HCT116 (cell line): ENCODE measurements at regions of chr9 and their contacts with region 1.

Region 1: DNA sequence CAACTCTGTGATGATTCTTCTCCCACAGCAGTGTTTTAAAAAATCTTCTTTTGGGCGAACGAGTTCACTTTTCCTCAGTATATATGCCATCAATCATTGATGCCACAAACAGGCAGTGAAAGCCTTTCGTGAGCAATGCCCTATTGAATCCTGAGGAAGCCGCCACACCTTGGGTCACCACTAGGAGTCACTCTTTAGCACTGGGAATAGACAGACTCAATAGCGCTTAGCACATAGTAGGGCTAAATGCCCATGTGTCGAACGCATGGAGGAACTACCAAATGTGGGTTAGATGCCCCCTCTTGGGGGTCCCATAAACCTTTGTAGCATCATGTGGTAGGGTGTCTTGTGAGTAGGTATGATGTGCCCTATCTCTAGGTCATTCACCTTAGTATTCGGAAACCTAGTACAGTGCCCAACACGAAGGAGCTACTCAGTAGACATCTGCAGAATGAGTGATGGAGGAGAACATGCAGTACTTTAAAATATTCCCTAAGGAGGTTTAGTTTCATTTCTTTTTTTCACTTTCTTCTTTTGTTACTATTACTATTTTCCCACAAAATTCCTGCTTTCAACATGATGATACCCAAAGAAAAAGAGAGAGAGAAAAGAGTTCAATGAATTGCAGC is 603.7 kb downstream of the BNC2 start:
- DNase-seq: no peak
- ATAC-seq: no peak
- H3K4me3 ChIP-seq: no peak overlapping the region
- H3K27ac ChIP-seq: no peak overlapping the region
- H3K4me1 ChIP-seq: no peaks in the 10 kb centered on the region
- H3K27me3 ChIP-seq: peaks cover 5% of the 10 kb centered on the region; the same call in 1 of the 2 replicates
- CTCF ChIP-seq: peak; percentile 21 to 87 (median 72); a peak in 5 of 6 replicates
- POLR2A ChIP-seq: no peak
- RAD21 ChIP-seq: peak; percentile 45

Region 2: DNA sequence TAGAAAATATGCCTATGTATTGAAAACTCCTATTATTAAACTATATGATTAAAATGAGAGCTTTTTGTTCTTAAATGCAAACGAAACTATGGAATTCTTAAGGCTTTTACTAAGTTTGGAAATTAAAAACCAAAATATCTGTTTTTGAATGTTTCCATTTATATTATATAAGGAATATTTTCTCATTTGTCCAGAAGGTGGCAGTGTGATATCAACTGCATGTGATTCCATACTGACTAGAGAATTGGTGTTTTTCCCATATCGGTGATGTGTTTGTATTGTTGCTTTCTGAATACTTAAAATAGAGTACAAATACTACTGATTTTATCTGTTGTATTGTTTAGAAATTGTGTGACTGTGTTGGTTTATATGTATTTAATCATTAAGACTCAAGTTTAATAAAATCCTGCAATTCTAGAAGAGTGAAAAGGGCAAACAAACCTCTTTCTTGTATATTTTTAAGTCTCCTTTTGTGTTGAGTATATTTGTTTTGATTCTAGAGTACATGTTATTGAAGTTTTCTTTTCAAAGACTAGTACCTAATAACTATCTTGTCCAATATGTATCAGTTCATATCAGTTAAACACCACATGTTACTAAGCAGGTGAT is 393.1 kb before region 1 on chr9:
- CTCF ChIA-PET with region 1: no interaction called
- POLR2A ChIA-PET with region 1: no interaction called
- RAD21 ChIA-PET with region 1: no interaction called
- intact Hi-C with region 1: loop called (anchors 5 kb)
- DNase-seq: peak; percentile 24
- ATAC-seq: peak; percentile 58; the same call in 1 of the 2 replicates
- H3K4me3 ChIP-seq: no peak overlapping the region
- H3K27ac ChIP-seq: no peak overlapping the region
- H3K4me1 ChIP-seq: no peaks in the 10 kb centered on the region
- H3K27me3 ChIP-seq: no peaks in the 10 kb centered on the region
- CTCF ChIP-seq: peak; percentile 51 to 72 (median 52); a peak in 5 of 6 replicates
- POLR2A ChIP-seq: no peak
- RAD21 ChIP-seq: peak; percentile 71

Region 3: DNA sequence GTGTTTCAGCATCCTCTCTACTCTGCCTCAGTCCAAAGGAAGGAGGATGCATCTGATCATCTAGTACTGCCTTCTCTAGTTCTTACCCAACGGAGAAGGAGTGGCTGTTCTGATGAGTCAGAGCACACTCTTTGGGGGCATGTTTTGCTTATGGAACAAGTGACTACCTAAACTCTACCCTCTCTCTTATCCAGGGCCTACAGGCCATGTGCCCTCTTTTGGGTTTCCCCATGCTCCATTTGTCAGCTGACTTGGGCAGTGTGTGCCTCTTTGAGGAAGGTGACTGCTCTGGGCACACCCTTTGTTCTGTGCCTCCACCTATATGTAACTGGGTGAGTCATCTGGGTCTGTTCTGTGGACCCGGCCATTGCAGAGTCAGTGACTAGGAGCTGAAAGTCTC is 693.3 kb after region 1 on chr9:
- CTCF ChIA-PET with region 1: no interaction called
- POLR2A ChIA-PET with region 1: no interaction called
- RAD21 ChIA-PET with region 1: no interaction called
- intact Hi-C with region 1: no loop called
- DNase-seq: no peak
- ATAC-seq: no peak
- H3K4me3 ChIP-seq: no peak overlapping the region
- H3K27ac ChIP-seq: no peak overlapping the region
- H3K4me1 ChIP-seq: peaks cover 0 to 9% of the 10 kb centered on the region in 2 experiments; a peak in 1 of 4 replicates
- H3K27me3 ChIP-seq: no peaks in the 10 kb centered on the region
- CTCF ChIP-seq: no peak
- POLR2A ChIP-seq: no peak
- RAD21 ChIP-seq: no peak